GM12878 (cell line): ENCODE measurements at regions of chr1 and their contacts with region 1.

Region 1: DNA sequence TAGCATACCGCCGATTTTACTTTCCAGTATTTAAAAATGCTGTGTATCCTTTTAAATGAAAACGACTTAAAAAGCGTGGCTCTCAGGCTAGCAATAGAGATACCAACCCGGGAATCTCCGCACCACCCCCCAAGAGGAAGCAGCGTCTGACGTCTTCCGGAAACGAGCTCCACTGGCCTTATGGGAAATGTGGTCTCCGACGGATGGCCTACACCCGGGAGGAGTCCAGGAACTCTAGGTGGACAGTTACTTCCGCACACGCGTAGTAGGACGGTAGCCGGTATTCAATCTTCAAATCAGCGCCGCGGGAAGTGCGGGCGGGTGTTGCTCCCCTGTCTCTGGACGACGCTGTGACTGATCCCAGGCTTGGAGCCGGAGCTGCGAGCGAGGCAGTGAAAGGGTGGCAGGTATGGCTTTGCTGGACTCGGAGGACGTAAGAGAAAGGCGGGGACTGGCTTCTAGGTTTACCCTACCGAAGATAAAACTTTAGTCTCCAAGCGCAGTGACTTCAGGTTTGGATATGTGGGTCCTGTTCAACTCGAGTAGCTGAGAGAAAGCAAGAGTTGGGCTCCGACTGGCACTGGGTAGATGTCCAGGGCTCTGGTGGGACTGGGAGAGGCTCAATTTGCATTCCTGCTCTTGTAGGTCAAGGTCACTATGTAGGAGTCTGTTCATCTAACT is at the start of gene ZNF684:
- DNase-seq: peak; percentile 89
- ATAC-seq: peak; percentile 97
- H3K4me3 ChIP-seq: peak within 1 kb of the TSS; percentile 71
- H3K27ac ChIP-seq: peak within 1 kb of the TSS; percentile 77
- H3K4me1 ChIP-seq: peaks cover 6% of the 10 kb centered on the region
- H3K27me3 ChIP-seq: no peaks in the 10 kb centered on the region
- CTCF ChIP-seq: no peak
- EP300 ChIP-seq: no peak
- POLR2A ChIP-seq: peak; percentile 80
- RAD21 ChIP-seq: no peak
- polyA plus RNA-seq, gene ZNF684: 5.9 to 6.2 TPM

Region 2: GRCh38 chr1:40143891-40144575 is 387.5 kb before region 1 on chr1:
- CTCF ChIA-PET with region 1: interaction called, 17 read pairs
- POLR2A ChIA-PET with region 1: interaction called, 3 read pairs
- RAD21 ChIA-PET with region 1: interaction called, 5 read pairs
- SMC1A ChIA-PET with region 1: no interaction called
- in situ Hi-C with region 1: no loop called
- intact Hi-C with region 1: no loop called
- DNase-seq: peak; percentile 39
- ATAC-seq: peak; percentile 96
- H3K4me3 ChIP-seq: no peak overlapping the region
- H3K27ac ChIP-seq: no peak overlapping the region
- H3K4me1 ChIP-seq: no peaks in the 10 kb centered on the region
- H3K27me3 ChIP-seq: no peaks in the 10 kb centered on the region; a peak in 1 of 4 replicates
- CTCF ChIP-seq: peak; percentile 69 to 84 (median 72)
- EP300 ChIP-seq: no peak
- POLR2A ChIP-seq: no peak
- RAD21 ChIP-seq: peak; percentile 95

Region 3: DNA sequence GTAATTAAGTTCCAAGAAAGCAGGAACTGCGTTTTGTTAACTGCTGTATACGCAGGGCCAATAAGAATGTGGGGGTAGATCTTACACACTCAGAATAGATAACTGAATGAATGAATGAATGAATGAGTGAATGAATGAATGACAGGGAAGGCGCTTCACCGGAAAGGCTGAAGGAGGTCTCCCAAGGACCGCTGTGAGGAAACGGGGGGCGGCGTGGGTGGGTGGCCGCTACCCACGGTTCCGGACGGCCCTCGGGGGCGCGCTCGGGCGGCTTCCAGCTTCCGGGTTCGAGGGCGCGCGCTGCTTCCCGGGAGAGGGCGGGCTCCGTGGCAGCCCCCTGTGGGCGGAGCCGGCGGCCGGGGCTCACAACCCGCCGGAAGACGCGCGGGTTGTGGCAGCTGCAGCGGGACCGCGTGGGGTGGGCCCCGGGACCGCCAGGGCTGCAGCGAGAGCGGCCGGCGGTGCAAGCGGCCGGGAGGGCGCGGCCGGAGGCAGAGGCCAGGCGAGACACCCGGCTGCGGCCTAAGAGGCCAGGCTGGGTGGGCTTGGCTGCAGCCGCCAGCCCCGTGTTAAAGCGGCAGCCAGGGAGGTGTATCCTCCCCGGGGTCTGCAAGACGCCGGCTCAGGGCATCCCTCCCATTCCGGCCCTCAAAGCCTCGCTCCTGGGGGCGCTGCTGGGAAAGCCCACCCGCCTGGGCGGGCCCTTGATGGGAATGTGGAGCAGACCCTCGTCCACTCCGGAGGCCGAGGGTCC is 54.4 kb before region 1 on chr1 and contains the start of gene ZFP69:
- CTCF ChIA-PET with region 1: interaction called, 18 read pairs
- POLR2A ChIA-PET with region 1: interaction called, 7 read pairs
- RAD21 ChIA-PET with region 1: interaction called, 3 read pairs
- SMC1A ChIA-PET with region 1: interaction called, 6 read pairs
- in situ Hi-C with region 1: no loop called
- intact Hi-C with region 1: no loop called
- DNase-seq: no peak
- ATAC-seq: peak; percentile 96
- H3K4me3 ChIP-seq: peak within 1 kb of the TSS; percentile 83
- H3K27ac ChIP-seq: peak within 1 kb of the TSS; percentile 72
- H3K4me1 ChIP-seq: no peaks in the 10 kb centered on the region
- H3K27me3 ChIP-seq: no peaks in the 10 kb centered on the region
- CTCF ChIP-seq: no peak
- EP300 ChIP-seq: no peak
- POLR2A ChIP-seq: peak; percentile 82
- RAD21 ChIP-seq: no peak
- polyA plus RNA-seq, gene ZFP69: 2.1 to 2.8 TPM

Region 4: GRCh38 chr1:40553017-40553416 is 21.5 kb after region 1 on chr1:
- CTCF ChIA-PET with region 1: interaction called, 14 read pairs
- POLR2A ChIA-PET with region 1: no interaction called
- RAD21 ChIA-PET with region 1: no interaction called
- SMC1A ChIA-PET with region 1: interaction called, 4 read pairs
- in situ Hi-C with region 1: no loop called
- intact Hi-C with region 1: no loop called
- DNase-seq: no peak
- ATAC-seq: no peak
- H3K4me3 ChIP-seq: no peak overlapping the region
- H3K27ac ChIP-seq: no peak overlapping the region
- H3K4me1 ChIP-seq: no peaks in the 10 kb centered on the region
- H3K27me3 ChIP-seq: no peaks in the 10 kb centered on the region
- CTCF ChIP-seq: no peak
- EP300 ChIP-seq: no peak
- POLR2A ChIP-seq: no peak
- RAD21 ChIP-seq: no peak

Region 5: DNA sequence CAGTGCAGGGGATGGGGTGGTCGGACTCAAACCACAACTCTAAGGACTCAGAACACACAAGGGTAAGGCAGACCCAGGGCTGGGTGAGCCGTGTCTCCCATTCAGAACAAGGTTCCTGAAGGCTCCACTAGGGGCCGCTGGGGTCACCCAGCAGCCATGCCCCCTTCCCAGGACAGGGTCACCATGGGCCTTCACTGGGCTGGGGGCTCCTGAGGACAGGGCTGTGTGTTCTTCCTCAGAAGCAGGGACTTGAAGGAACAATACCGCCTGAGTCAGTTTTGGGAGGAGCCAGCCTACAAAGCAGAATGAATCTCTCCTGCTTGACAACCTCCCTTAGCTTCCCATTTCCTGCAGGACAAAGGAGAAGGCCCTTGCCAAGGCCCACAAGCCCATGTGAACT is 118.6 kb after region 1 on chr1:
- CTCF ChIA-PET with region 1: no interaction called
- POLR2A ChIA-PET with region 1: no interaction called
- RAD21 ChIA-PET with region 1: no interaction called
- SMC1A ChIA-PET with region 1: no interaction called
- in situ Hi-C with region 1: no loop called
- intact Hi-C with region 1: no loop called
- DNase-seq: no peak
- ATAC-seq: peak; percentile 89
- H3K4me3 ChIP-seq: no peak overlapping the region
- H3K27ac ChIP-seq: no peak overlapping the region
- H3K4me1 ChIP-seq: no peaks in the 10 kb centered on the region
- H3K27me3 ChIP-seq: no peaks in the 10 kb centered on the region
- CTCF ChIP-seq: peak; percentile 42 to 69 (median 48)
- EP300 ChIP-seq: no peak
- POLR2A ChIP-seq: no peak
- RAD21 ChIP-seq: peak; percentile 42

Region 6: DNA sequence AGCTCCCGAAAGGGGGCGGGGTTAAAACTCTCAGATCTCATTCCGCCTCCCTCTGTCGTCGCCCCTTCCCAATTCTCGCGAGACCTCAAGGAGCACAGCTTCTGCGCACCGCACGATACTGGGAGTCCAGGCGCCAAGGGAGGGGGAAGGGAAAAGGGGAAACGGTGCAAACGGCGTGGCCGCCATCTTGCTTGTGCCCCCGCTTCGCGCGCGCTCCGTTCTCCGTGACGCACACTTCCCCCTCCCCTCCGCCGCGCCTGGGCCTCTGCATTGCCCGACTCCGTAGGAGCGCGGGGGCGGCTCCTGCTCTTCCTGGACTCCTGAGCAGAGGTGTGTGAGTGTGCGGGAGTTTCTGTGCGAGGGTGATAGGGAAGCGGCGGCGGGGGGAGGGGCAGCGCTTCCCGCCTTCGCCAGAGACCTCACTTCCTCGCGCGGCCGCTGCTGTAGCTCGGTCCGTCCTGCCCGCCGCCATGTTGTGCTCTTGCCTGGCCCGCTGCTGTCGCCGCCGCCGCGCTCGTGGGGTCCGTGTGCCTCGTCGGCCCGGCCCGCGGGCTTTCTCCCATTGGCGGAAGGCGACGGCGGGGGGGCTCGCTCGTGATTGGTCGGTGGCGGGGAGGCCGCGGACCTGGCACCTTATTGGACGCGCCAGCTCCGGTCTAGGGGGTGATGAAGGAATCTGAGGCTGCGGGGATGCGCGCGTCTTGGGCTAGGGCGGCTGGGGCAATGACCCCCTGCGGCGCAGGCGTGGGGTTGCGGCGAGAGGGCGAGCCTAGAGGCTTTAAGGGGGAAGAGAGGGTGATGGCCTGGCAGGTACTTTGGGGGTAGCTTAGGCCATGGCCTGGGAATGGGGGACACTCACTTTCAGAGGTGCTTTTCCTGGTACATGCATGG is 160.3 kb after region 1 on chr1 and contains the start of gene NFYC:
- CTCF ChIA-PET with region 1: interaction called, 11 read pairs
- POLR2A ChIA-PET with region 1: interaction called, 3 read pairs
- RAD21 ChIA-PET with region 1: interaction called, 7 read pairs
- SMC1A ChIA-PET with region 1: interaction called, 3 read pairs
- in situ Hi-C with region 1: no loop called
- intact Hi-C with region 1: no loop called
- DNase-seq: peak; percentile 94
- ATAC-seq: peak; percentile 94
- H3K4me3 ChIP-seq: peak within 1 kb of the TSS; percentile 95
- H3K27ac ChIP-seq: peak within 1 kb of the TSS; percentile 98
- H3K4me1 ChIP-seq: peaks cover 32% of the 10 kb centered on the region
- H3K27me3 ChIP-seq: no peaks in the 10 kb centered on the region
- CTCF ChIP-seq: peak in 1 of 3 experiments; percentile 10; a peak in 1 of 6 replicates
- EP300 ChIP-seq: peak in 1 of 2 experiments; percentile 45; a peak in 2 of 4 replicates
- POLR2A ChIP-seq: peak; percentile 99
- RAD21 ChIP-seq: no peak
- polyA plus RNA-seq, gene NFYC: 4.3 to 6.9 TPM

Region 7: DNA sequence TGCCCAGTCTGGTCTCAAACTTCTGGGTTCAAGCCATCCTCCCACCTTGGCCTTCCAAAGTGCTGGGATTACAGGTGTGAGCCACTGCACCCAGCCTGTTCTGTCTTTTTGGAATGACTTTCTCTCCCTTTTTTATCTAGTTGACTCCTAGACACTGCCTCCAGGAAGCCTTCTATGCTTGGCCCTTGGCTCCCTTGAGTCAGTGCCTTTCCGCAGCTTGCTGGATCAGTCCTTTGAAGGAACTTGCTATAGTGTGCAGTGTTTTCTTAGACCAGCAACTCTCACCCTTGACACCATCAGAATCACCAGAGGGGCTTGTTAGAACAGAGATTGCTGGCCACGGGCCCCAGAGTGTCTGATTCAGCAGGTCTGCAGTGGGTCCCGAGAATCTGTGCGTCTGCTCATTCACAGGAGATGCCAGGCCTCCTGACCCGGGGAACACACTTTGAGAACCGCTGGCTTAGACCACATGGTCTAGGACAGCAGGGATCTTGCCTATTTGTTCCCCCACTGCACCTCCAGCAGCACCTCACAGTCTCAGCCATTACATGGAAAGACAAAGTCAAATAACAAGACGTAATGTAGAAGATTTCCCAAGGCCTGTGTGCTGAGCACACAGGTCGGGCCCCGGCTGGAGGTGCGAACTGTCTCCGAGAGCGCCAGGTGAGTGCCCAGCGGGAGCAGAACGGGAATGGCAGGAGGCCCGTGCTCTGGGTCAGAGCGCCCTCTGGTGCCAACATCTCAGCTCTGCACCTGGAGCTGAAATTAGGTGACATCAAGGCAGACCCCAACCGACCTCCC is 420.6 kb after region 1 on chr1:
- CTCF ChIA-PET with region 1: interaction called, 38 read pairs
- POLR2A ChIA-PET with region 1: no interaction called
- RAD21 ChIA-PET with region 1: interaction called, 8 read pairs
- SMC1A ChIA-PET with region 1: interaction called, 9 read pairs
- in situ Hi-C with region 1: no loop called
- intact Hi-C with region 1: loop called (anchors 5 kb)
- DNase-seq: no peak
- ATAC-seq: peak; percentile 88
- H3K4me3 ChIP-seq: no peak overlapping the region
- H3K27ac ChIP-seq: no peak overlapping the region
- H3K4me1 ChIP-seq: no peaks in the 10 kb centered on the region
- H3K27me3 ChIP-seq: no peaks in the 10 kb centered on the region
- CTCF ChIP-seq: peak; percentile 91 to 94 (median 92)
- EP300 ChIP-seq: no peak
- POLR2A ChIP-seq: no peak
- RAD21 ChIP-seq: peak; percentile 87